ENCODE measurements at regions of chr18 and their contacts with region 1.

Region 1: GRCh38 chr18:63367053-63367953 is at the start of gene KDSR:
- DNase-seq: peak; percentile 58 to 87 (median 78)
- ATAC-seq: peak; percentile 82
- H3K4me3 ChIP-seq: peak within 1 kb of the TSS; percentile 87 to 89
- H3K4me3 Mint-ChIP-seq: peak within 1 kb of the TSS; percentile 89
- H3K27ac ChIP-seq: peak within 1 kb of the TSS; percentile 63 to 65
- H3K27ac Mint-ChIP-seq: peak within 1 kb of the TSS; percentile 86
- H3K4me1 ChIP-seq: peaks cover 33% of the 10 kb centered on the region
- H3K4me1 Mint-ChIP-seq: peaks cover 45% of the 10 kb centered on the region
- H3K27me3 ChIP-seq: no peaks in the 10 kb centered on the region
- H3K27me3 Mint-ChIP-seq: no peaks in the 10 kb centered on the region
- CTCF ChIP-seq: no peak
- total RNA-seq, gene KDSR: 12.8 to 13.9 TPM

Region 2: GRCh38 chr18:63292831-63293683 is 74.2 kb before region 1 on chr18:
- CTCF ChIA-PET with region 1: no interaction called
- POLR2A ChIA-PET with region 1: no interaction called
- intact Hi-C with region 1: no loop called
- DNase-seq: peak in 7 of 9 experiments; percentile 24 to 60 (median 39)
- ATAC-seq: peak; percentile 53
- H3K4me3 ChIP-seq: peak overlapping the region in 1 of 2 experiments; percentile 2
- H3K4me3 Mint-ChIP-seq: peak overlapping the region; percentile 36
- H3K27ac ChIP-seq: peak overlapping the region in 1 of 2 experiments; percentile 9
- H3K27ac Mint-ChIP-seq: peak overlapping the region; percentile 93
- H3K4me1 ChIP-seq: peaks cover 63% of the 10 kb centered on the region
- H3K4me1 Mint-ChIP-seq: peaks cover 56% of the 10 kb centered on the region
- H3K27me3 ChIP-seq: no peaks in the 10 kb centered on the region
- H3K27me3 Mint-ChIP-seq: no peaks in the 10 kb centered on the region
- CTCF ChIP-seq: no peak

Region 3: DNA sequence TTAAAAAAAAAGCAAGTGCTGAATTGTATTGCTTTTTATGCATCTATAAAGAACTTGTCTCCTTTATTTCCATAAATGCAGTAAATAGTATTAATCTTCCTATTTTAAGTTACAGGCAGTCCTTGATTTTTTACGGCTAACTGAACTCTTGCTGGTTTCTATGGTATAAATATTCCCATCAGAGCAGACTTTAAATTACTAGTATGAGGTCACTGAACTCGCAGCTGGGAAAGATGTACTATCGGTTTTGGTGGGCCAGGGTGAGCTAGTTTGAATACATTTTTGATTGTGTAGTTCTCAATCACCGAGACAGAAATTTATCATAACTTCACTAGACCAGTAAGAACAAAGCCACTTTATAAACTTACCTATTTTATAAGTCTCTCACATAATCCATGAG is 20.6 kb after region 1 on chr18:
- CTCF ChIA-PET with region 1: interaction called, 3 read pairs
- POLR2A ChIA-PET with region 1: interaction called, 3 read pairs
- intact Hi-C with region 1: loop called in 1 of 2 experiments (anchors 2 kb)
- DNase-seq: no peak
- ATAC-seq: no peak
- H3K4me3 ChIP-seq: no peak overlapping the region
- H3K4me3 Mint-ChIP-seq: no peak overlapping the region
- H3K27ac ChIP-seq: no peak overlapping the region
- H3K27ac Mint-ChIP-seq: no peak overlapping the region
- H3K4me1 ChIP-seq: no peaks in the 10 kb centered on the region
- H3K4me1 Mint-ChIP-seq: no peaks in the 10 kb centered on the region
- H3K27me3 ChIP-seq: no peaks in the 10 kb centered on the region
- H3K27me3 Mint-ChIP-seq: no peaks in the 10 kb centered on the region
- CTCF ChIP-seq: no peak

Region 4: DNA sequence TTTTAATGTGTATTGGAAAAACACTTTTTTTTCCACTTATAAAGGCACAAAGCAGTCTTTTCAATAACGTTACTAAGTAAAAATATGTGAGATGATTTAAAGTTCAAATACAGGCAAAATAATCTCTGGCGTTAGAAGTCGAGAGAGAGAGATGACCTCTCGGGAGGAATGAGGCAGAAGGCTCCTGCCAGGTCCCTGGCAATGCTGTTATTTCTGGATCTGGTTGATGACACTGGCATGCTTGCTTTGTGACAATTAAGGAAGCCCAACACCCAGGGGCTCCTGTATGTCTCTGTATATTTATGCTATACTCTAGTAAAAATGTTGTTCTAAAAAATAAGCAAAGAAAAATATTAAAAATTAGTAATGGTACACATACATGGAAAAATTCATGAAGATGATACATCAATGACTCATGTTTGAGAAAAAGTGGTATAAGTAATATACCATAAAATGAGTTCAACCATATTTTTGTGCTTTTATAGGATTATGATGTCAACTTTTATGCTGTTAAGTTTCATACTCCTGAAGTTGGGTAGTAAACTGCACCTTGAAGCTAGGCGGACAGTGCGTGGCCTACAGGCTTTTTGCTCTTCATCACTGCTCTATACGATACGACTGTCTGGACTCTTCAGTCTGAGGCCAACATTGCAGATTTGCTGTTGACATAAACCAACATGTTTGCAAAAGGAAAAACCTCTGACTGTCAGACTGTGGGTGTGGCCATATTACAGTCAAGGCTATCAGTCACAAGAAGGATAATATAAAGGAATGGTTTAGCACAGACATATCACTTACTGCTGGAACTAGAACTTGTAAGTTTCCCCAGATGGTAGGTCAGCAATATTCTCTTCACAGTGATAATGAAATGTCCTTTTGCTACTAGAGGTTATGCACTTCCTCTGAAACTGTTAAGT is 35.2 kb after region 1 on chr18:
- CTCF ChIA-PET with region 1: no interaction called
- POLR2A ChIA-PET with region 1: interaction called, 3 read pairs
- intact Hi-C with region 1: loop called in 1 of 2 experiments (anchors 5 kb)
- DNase-seq: no peak
- ATAC-seq: no peak
- H3K4me3 ChIP-seq: no peak overlapping the region
- H3K4me3 Mint-ChIP-seq: no peak overlapping the region
- H3K27ac ChIP-seq: no peak overlapping the region
- H3K27ac Mint-ChIP-seq: no peak overlapping the region
- H3K4me1 ChIP-seq: no peaks in the 10 kb centered on the region
- H3K4me1 Mint-ChIP-seq: peaks cover 10% of the 10 kb centered on the region
- H3K27me3 ChIP-seq: no peaks in the 10 kb centered on the region
- H3K27me3 Mint-ChIP-seq: no peaks in the 10 kb centered on the region
- CTCF ChIP-seq: no peak

Region 5: GRCh38 chr18:63553117-63553516 is 185.8 kb after region 1 on chr18:
- CTCF ChIA-PET with region 1: no interaction called
- POLR2A ChIA-PET with region 1: no interaction called
- intact Hi-C with region 1: no loop called
- DNase-seq: no peak
- ATAC-seq: no peak
- H3K4me3 ChIP-seq: no peak overlapping the region
- H3K4me3 Mint-ChIP-seq: no peak overlapping the region
- H3K27ac ChIP-seq: no peak overlapping the region
- H3K27ac Mint-ChIP-seq: no peak overlapping the region
- H3K4me1 ChIP-seq: no peaks in the 10 kb centered on the region
- H3K4me1 Mint-ChIP-seq: no peaks in the 10 kb centered on the region
- H3K27me3 ChIP-seq: no peaks in the 10 kb centered on the region
- H3K27me3 Mint-ChIP-seq: peaks cover 6% of the 10 kb centered on the region
- CTCF ChIP-seq: no peak

Region 6: GRCh38 chr18:63969960-63970802 is 602.9 kb after region 1 on chr18 and contains the start of gene SERPINB8:
- CTCF ChIA-PET with region 1: no interaction called
- POLR2A ChIA-PET with region 1: no interaction called
- intact Hi-C with region 1: loop called in 1 of 2 experiments (anchors 5 kb)
- DNase-seq: peak; percentile 48 to 88 (median 79)
- ATAC-seq: peak; percentile 87
- H3K4me3 ChIP-seq: peak within 1 kb of the TSS; percentile 68 to 97
- H3K4me3 Mint-ChIP-seq: peak within 1 kb of the TSS; percentile 98
- H3K27ac ChIP-seq: peak within 1 kb of the TSS; percentile 78 to 92
- H3K27ac Mint-ChIP-seq: peak within 1 kb of the TSS; percentile 96
- H3K4me1 ChIP-seq: peaks cover 16% of the 10 kb centered on the region
- H3K4me1 Mint-ChIP-seq: peaks cover 41% of the 10 kb centered on the region
- H3K27me3 ChIP-seq: no peaks in the 10 kb centered on the region
- H3K27me3 Mint-ChIP-seq: no peaks in the 10 kb centered on the region
- CTCF ChIP-seq: no peak
- total RNA-seq, gene SERPINB8: 14.8 to 15.7 TPM

Region 7: GRCh38 chr18:64936671-64937070 is 1569.4 kb after region 1 on chr18:
- CTCF ChIA-PET with region 1: no interaction called
- POLR2A ChIA-PET with region 1: no interaction called
- intact Hi-C with region 1: no loop called
- DNase-seq: no peak
- ATAC-seq: no peak
- H3K4me3 ChIP-seq: no peak overlapping the region
- H3K4me3 Mint-ChIP-seq: no peak overlapping the region
- H3K27ac ChIP-seq: no peak overlapping the region
- H3K27ac Mint-ChIP-seq: no peak overlapping the region
- H3K4me1 ChIP-seq: no peaks in the 10 kb centered on the region
- H3K4me1 Mint-ChIP-seq: no peaks in the 10 kb centered on the region
- H3K27me3 ChIP-seq: no peaks in the 10 kb centered on the region
- H3K27me3 Mint-ChIP-seq: no peaks in the 10 kb centered on the region
- CTCF ChIP-seq: no peak